Activated CD4-positive, alpha-beta memory T cell treated with anti-CD3 and anti-CD28 coated beads for 36 hours (primary cell): ENCODE measurements at regions of chr20 and their contacts with region 1.

Region 1: DNA sequence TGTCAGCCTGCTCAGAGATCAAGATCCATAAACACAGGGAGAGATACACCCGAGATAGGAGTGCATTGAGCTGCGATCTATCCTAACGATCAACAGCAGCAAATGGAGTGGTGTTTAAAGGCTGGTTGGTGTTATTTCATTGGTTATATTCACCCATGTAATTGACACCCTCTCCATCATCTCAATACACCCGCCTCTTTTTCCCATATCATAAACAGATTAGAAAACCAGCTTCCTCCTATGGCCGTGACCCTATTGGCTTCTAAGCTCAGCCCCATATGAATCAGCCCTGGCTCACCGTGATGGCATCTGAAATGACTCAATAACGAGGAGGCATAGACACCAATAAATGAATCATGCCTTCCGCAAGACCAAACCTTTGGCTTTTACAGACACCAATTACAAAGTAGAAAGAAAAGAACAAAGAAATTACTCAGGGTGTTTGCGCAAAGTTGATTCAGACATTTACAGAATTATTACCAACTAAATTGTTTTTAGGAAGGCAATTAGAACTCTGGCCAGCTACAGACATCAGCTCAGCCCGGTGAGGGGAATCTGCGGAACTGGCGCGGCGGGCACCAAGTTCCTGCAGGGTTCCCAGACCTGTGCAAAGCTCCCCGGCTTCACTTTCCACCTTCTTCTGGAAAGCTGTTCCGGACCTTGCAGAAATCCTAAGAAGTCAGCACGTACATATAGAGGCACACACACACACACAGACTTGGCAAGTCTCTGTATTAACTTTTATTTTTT is 11.5 kb downstream of the PMEPA1 start:
- DNase-seq: peak; percentile 89
- H3K4me3 Mint-ChIP-seq: peak overlapping the region; percentile 32
- H3K27ac Mint-ChIP-seq: peak overlapping the region; percentile 84
- H3K4me1 Mint-ChIP-seq: peaks cover 41% of the 10 kb centered on the region
- H3K27me3 Mint-ChIP-seq: peaks cover 2% of the 10 kb centered on the region

Region 2: DNA sequence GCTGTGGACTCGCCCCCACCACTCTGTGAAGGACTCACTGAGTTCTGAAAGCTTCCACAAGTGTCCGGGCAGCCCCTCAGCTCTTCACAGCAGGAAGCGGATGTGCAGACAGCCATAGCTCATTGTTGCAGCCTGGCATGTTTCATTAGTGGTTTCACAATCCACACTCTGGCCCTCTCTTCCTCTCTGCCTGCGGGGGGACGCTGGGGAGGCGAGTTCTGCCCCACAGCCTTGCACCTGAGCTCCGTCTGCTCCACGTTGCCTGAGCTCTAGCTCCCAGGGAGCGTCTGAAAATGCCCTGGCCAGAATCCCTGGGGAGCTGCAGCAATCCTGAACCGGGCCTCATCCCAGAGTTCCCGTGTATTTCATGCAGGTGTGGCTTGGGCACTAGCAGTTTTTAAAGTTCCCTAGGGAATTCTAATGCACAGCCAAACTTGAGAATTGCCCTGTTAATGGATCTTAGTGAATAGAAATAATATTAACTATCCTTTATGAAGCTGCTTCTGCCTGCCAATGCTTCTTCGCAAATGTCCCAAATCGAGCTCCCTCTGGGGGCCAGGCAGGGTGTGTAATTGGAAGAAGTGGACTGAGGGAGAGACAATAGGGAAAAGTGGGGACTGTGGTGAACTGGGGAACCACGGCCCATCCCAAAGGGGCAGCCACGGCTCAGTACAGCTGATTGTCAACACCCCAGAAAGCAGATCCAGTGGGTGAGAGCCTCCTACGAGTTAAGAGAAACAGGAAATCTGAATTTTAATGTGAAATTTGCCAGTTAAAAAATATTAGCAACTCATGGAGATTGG is 224.8 kb before region 1 on chr20:
- CTCF ChIA-PET with region 1: no interaction called
- POLR2A ChIA-PET with region 1: no interaction called
- intact Hi-C with region 1: no loop called
- DNase-seq: peak; percentile 36
- H3K4me3 Mint-ChIP-seq: no peak overlapping the region
- H3K27ac Mint-ChIP-seq: no peak overlapping the region
- H3K4me1 Mint-ChIP-seq: peaks cover 10% of the 10 kb centered on the region
- H3K27me3 Mint-ChIP-seq: no peaks in the 10 kb centered on the region

Region 3: GRCh38 chr20:57498425-57499400 is 199.6 kb before region 1 on chr20:
- CTCF ChIA-PET with region 1: no interaction called
- POLR2A ChIA-PET with region 1: no interaction called
- intact Hi-C with region 1: no loop called
- DNase-seq: peak; percentile 63
- H3K4me3 Mint-ChIP-seq: no peak overlapping the region
- H3K27ac Mint-ChIP-seq: no peak overlapping the region
- H3K4me1 Mint-ChIP-seq: peaks cover 10% of the 10 kb centered on the region
- H3K27me3 Mint-ChIP-seq: peaks cover 26% of the 10 kb centered on the region

Region 4: DNA sequence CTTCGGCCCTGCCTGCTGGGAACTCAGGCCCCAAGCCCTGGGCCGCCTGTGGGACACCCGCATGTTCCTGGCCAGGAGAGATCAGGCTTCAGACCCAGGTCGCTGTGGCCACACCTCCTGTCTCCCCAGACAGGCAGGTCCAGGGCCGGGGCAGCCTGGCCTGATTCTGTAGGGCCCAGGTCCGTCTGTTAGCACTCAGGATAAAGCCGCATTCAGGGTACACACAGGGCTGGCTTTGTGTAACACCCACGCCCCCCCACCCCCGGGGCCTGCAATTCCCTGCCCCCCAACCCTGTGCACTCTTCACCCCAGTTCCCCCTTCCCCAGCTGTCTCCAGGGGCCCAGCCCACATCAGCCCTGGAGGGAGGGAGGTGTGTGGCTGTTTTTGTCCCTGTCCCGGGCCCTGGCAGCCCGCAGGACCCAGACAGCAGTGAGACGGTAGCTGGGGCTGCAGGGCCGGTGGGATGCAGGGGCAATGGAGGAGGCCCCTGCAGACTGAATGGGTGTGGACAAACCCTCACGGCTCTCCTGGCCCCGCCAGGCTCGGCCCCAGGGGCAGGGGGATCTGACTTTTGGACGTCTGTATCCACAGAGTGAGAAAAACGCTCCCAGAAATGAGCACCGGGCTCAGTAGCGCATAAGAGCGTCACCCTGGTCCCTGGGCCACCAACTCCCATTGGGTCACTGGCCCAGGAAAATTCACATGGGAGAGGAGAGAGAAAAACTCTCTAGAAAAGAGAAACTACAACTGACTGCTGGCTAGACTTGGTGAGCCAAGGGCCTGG is 35.6 kb before region 1 on chr20:
- CTCF ChIA-PET with region 1: no interaction called
- POLR2A ChIA-PET with region 1: no interaction called
- intact Hi-C with region 1: no loop called
- DNase-seq: peak; percentile 3
- H3K4me3 Mint-ChIP-seq: no peak overlapping the region
- H3K27ac Mint-ChIP-seq: no peak overlapping the region
- H3K4me1 Mint-ChIP-seq: peaks cover 9% of the 10 kb centered on the region
- H3K27me3 Mint-ChIP-seq: no peaks in the 10 kb centered on the region

Region 5: GRCh38 chr20:57682184-57683101 is 15.8 kb before region 1 on chr20:
- CTCF ChIA-PET with region 1: no interaction called
- POLR2A ChIA-PET with region 1: no interaction called
- intact Hi-C with region 1: no loop called
- DNase-seq: no peak
- H3K4me3 Mint-ChIP-seq: no peak overlapping the region
- H3K27ac Mint-ChIP-seq: no peak overlapping the region
- H3K4me1 Mint-ChIP-seq: peaks cover 15% of the 10 kb centered on the region
- H3K27me3 Mint-ChIP-seq: peaks cover 2% of the 10 kb centered on the region

Region 6: GRCh38 chr20:57709931-57710799 is 11.9 kb after region 1 on chr20 and contains the start of gene PMEPA1:
- CTCF ChIA-PET with region 1: interaction called, 15 read pairs
- POLR2A ChIA-PET with region 1: interaction called, 11 read pairs
- intact Hi-C with region 1: loop called (anchors 1 kb)
- DNase-seq: peak; percentile 93
- H3K4me3 Mint-ChIP-seq: peak within 1 kb of the TSS; percentile 78
- H3K27ac Mint-ChIP-seq: peak within 1 kb of the TSS; percentile 69
- H3K4me1 Mint-ChIP-seq: peaks cover 21% of the 10 kb centered on the region
- H3K27me3 Mint-ChIP-seq: peaks cover 6% of the 10 kb centered on the region
- total RNA-seq, gene PMEPA1: 2.5 to 3.0 TPM

Region 7: DNA sequence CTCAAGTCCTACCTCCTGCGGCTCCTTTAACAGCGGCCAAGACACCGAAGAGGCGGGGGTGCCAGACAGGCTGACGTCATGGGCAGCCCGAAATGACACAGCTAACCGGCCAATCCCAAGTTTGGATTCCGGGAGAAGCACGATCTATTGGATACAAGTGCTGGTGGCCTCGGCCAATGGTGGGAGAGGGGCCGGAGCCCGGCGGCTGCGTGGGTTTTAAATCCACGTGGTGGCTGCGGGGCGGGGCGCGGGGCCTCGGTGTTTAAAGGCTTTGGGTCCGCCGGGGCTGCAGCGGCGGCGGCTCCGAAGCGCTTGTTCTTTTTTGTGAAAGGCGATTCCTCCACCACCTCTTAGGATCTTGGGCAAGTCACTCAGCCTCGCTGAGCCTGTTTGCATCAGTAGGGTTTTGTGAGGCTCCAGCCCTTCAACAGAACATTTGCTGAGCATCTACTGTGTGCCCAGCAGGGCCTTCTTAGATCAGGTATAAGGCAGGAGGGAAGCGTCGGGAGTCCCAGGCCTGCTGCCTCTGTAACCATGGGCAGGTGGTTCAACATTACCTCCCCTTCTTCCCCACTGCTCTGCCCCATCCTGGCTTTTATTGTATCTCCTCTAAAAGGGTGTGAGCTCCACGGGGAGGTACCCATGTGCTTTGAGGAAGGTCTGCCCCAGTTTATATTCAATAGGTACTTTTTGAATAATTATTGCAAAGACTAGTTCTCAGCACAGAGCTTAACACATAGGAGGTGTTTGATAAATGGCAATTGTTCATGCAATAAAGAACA is 20.4 kb after region 1 on chr20:
- CTCF ChIA-PET with region 1: no interaction called
- POLR2A ChIA-PET with region 1: no interaction called
- intact Hi-C with region 1: loop called (anchors 1 kb)
- DNase-seq: peak; percentile 96
- H3K4me3 Mint-ChIP-seq: peak overlapping the region; percentile 37
- H3K27ac Mint-ChIP-seq: no peak overlapping the region
- H3K4me1 Mint-ChIP-seq: peaks cover 9% of the 10 kb centered on the region
- H3K27me3 Mint-ChIP-seq: peaks cover 1% of the 10 kb centered on the region

Region 8: DNA sequence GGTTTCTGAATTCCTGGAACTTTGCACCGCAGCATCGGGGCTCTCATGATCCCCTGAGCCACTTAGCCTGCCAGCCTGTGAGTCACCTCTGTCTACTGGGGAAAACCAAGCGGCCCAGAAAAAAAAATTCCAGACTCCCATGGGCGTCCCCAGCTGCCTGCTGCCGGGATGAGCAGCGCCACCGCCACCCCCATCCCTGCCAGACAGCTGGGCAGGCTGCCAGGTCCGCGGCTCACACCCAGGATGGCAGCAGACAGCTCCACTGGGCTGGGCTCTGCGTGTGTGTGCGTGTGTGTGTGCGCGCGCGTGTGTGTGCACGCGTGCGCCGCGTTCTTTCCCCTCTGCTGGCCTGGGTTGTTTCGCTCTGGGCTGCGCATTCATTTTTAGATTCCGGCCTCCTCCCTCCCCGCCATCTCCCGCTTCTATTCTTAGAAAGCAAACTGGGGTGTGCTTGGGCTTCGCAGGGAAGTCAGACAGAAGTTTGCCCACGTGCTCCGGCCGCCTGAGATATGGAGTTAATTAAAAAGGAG is 50.4 kb after region 1 on chr20:
- CTCF ChIA-PET with region 1: no interaction called
- POLR2A ChIA-PET with region 1: no interaction called
- intact Hi-C with region 1: loop called (anchors 1 kb)
- DNase-seq: peak; percentile 73
- H3K4me3 Mint-ChIP-seq: peak overlapping the region; percentile 51
- H3K27ac Mint-ChIP-seq: no peak overlapping the region
- H3K4me1 Mint-ChIP-seq: peaks cover 12% of the 10 kb centered on the region
- H3K27me3 Mint-ChIP-seq: peaks cover 28% of the 10 kb centered on the region